IMR-90 (cell line): ENCODE measurements at regions of chr20 and their contacts with region 1.

Region 1: GRCh38 chr20:24651171-24651975 is 181.9 kb downstream of the SYNDIG1 start:
- DNase-seq: peak; percentile 97
- ATAC-seq: peak; percentile 88
- H3K4me3 ChIP-seq: no peak overlapping the region
- H3K27ac ChIP-seq: peak overlapping the region; percentile 70
- H3K4me1 ChIP-seq: peaks cover 22% of the 10 kb centered on the region
- H3K27me3 ChIP-seq: 0 out of 2 replicates have a peak, but pooled peaks cover 5% of the 10 kb centered on the region
- CTCF ChIP-seq: no peak
- POLR2A ChIP-seq: no peak
- RAD21 ChIP-seq: peak; percentile 8; the same call in 1 of the 2 replicates

Region 2: GRCh38 chr20:24662752-24663365 is 11.5 kb after region 1 on chr20:
- CTCF ChIA-PET with region 1: no interaction called
- POLR2A ChIA-PET with region 1: no interaction called
- dilution Hi-C with region 1: no loop called
- in situ Hi-C with region 1: no loop called
- intact Hi-C with region 1: no loop called
- DNase-seq: peak; percentile 48
- ATAC-seq: peak; percentile 37; the same call in 1 of the 2 replicates
- H3K4me3 ChIP-seq: no peak overlapping the region
- H3K27ac ChIP-seq: no peak overlapping the region
- H3K4me1 ChIP-seq: peaks cover 4% of the 10 kb centered on the region; the same call in 1 of the 2 replicates
- H3K27me3 ChIP-seq: peaks cover 22% of the 10 kb centered on the region
- CTCF ChIP-seq: no peak
- POLR2A ChIP-seq: no peak
- RAD21 ChIP-seq: no peak

Region 3: GRCh38 chr20:24672886-24673677 is 21.7 kb after region 1 on chr20:
- CTCF ChIA-PET with region 1: no interaction called
- POLR2A ChIA-PET with region 1: no interaction called
- dilution Hi-C with region 1: no loop called
- in situ Hi-C with region 1: no loop called
- intact Hi-C with region 1: loop called (anchors 2 kb)
- DNase-seq: peak; percentile 97
- ATAC-seq: peak; percentile 96
- H3K4me3 ChIP-seq: no peak overlapping the region
- H3K27ac ChIP-seq: peak overlapping the region; percentile 84
- H3K4me1 ChIP-seq: peaks cover 18% of the 10 kb centered on the region
- H3K27me3 ChIP-seq: no peaks in the 10 kb centered on the region
- CTCF ChIP-seq: no peak
- POLR2A ChIP-seq: no peak
- RAD21 ChIP-seq: no peak